Activated CD4-positive, alpha-beta memory T cell treated with anti-CD3 and anti-CD28 coated beads for 36 hours (primary cell): ENCODE measurements at regions of chr16 and their contacts with region 1.

Region 1: DNA sequence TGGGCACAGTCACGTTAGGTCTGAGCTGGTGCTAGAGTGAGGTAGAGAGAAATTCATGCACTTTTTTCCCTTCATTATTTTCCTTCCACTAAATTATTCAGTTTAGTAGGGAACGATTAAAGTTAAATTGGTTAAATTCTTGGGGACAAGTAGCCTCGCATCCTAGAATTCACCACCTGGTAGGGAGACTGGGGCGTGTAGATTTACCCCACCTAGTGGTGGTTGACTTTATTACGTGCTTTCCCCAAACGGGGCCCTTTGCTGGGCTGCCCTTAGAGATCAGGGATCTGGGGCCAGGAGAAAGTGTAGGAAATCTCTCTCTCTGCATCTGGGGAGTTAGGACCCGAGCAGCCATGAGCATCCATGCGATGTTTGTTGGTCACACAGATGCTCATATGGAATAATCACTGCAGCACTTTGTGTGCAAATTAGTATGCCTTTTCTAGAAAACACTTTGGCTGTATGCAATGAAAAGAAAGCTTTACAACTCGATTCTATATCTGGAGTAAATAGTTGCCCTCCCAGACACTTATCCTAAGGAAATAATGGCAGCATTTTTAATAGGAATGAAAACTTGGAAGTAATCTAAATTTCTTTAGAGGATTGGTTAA is 107.0 kb downstream of the PLCG2 start:
- DNase-seq: peak; percentile 35
- H3K4me3 Mint-ChIP-seq: no peak overlapping the region
- H3K27ac Mint-ChIP-seq: no peak overlapping the region
- H3K4me1 Mint-ChIP-seq: no peaks in the 10 kb centered on the region
- H3K27me3 Mint-ChIP-seq: no peaks in the 10 kb centered on the region

Region 2: DNA sequence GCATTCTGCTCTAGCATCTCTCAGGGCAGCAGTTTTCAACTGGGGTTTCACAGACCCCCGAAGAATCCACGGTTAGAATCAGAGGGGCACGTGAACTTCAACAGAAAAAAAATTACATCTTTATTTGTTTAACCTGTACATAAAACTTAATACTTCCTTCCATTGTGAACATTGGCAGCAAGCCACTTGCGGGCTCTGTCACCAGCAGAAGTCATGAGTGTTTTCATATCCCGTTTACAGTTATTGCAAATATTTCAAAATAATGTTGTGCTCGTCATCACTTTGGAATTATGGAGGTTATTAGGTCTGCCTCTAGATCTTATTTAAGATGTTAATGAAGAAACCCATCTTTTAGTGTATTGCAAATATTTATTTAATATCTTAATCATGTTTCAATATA is 15.4 kb after region 1 on chr16:
- CTCF ChIA-PET with region 1: interaction called, 16 read pairs
- POLR2A ChIA-PET with region 1: no interaction called
- intact Hi-C with region 1: no loop called
- DNase-seq: no peak
- H3K4me3 Mint-ChIP-seq: no peak overlapping the region
- H3K27ac Mint-ChIP-seq: no peak overlapping the region
- H3K4me1 Mint-ChIP-seq: no peaks in the 10 kb centered on the region
- H3K27me3 Mint-ChIP-seq: no peaks in the 10 kb centered on the region

Region 3: DNA sequence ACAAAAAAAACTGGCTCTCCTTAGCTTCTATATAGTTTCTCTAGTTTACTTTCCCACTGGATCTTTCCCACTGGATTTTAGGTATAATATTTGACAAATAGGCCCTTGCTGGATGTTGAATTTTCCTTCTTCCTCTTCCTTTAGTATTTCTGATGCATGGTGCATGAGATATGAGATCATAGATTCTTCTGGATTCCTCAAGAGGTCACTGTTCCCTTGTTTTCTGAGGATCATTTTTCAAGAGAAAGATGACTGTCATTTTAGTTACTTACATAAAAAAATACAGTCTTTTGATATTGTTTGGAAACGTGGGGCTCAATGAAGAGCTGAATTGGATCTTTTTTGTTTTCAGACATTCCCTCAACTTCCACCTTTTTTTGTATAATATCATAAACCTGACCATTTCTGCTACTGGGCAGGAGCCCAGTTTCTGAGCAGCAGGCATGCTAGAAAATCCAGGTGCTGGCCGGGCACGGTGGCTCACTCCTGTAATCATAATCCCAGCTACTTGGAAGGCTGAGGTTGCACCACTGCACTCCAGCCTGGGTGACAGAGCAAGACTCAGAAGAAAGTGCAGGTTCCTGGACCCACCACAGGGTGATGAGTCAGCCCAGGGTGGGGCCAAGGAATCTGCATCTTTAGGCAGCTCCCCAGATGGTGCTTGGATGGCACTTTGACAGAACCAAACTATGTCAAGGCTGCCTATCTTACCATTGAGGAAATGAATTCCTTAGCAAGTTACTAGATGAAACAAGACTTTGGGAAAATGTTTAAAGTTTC is 54.9 kb after region 1 on chr16:
- CTCF ChIA-PET with region 1: no interaction called
- POLR2A ChIA-PET with region 1: no interaction called
- intact Hi-C with region 1: no loop called
- DNase-seq: peak; percentile 18
- H3K4me3 Mint-ChIP-seq: no peak overlapping the region
- H3K27ac Mint-ChIP-seq: no peak overlapping the region
- H3K4me1 Mint-ChIP-seq: no peaks in the 10 kb centered on the region
- H3K27me3 Mint-ChIP-seq: no peaks in the 10 kb centered on the region

Region 4: GRCh38 chr16:82061861-82062525 is 175.9 kb after region 1 on chr16:
- CTCF ChIA-PET with region 1: interaction called, 4 read pairs
- POLR2A ChIA-PET with region 1: no interaction called
- intact Hi-C with region 1: loop called (anchors 1 kb)
- DNase-seq: no peak
- H3K4me3 Mint-ChIP-seq: no peak overlapping the region
- H3K27ac Mint-ChIP-seq: no peak overlapping the region
- H3K4me1 Mint-ChIP-seq: no peaks in the 10 kb centered on the region
- H3K27me3 Mint-ChIP-seq: peaks cover 15% of the 10 kb centered on the region